ENCODE measurements at regions of chr4 and their contacts with region 1.

Region 1: GRCh38 chr4:67746797-67747495 is 7.2 kb downstream of the GNRHR start:
- DNase-seq: peak in 2 of 9 experiments; percentile 41 to 51
- ATAC-seq: no peak
- H3K4me3 ChIP-seq: no peak overlapping the region
- H3K4me3 Mint-ChIP-seq: no peak overlapping the region
- H3K27ac ChIP-seq: no peak overlapping the region
- H3K27ac Mint-ChIP-seq: no peak overlapping the region
- H3K4me1 ChIP-seq: no peaks in the 10 kb centered on the region
- H3K4me1 Mint-ChIP-seq: no peaks in the 10 kb centered on the region
- H3K27me3 ChIP-seq: no peaks in the 10 kb centered on the region
- H3K27me3 Mint-ChIP-seq: no peaks in the 10 kb centered on the region
- CTCF ChIP-seq: peak; percentile 87

Region 2: GRCh38 chr4:67393699-67394281 is 353.2 kb before region 1 on chr4:
- CTCF ChIA-PET with region 1: no interaction called
- POLR2A ChIA-PET with region 1: no interaction called
- intact Hi-C with region 1: no loop called
- DNase-seq: peak in 3 of 9 experiments; percentile 11 to 53 (median 46)
- ATAC-seq: no peak
- H3K4me3 ChIP-seq: no peak overlapping the region
- H3K4me3 Mint-ChIP-seq: no peak overlapping the region
- H3K27ac ChIP-seq: no peak overlapping the region
- H3K27ac Mint-ChIP-seq: no peak overlapping the region
- H3K4me1 ChIP-seq: no peaks in the 10 kb centered on the region
- H3K4me1 Mint-ChIP-seq: no peaks in the 10 kb centered on the region
- H3K27me3 ChIP-seq: no peaks in the 10 kb centered on the region
- H3K27me3 Mint-ChIP-seq: no peaks in the 10 kb centered on the region
- CTCF ChIP-seq: peak; percentile 95

Region 3: DNA sequence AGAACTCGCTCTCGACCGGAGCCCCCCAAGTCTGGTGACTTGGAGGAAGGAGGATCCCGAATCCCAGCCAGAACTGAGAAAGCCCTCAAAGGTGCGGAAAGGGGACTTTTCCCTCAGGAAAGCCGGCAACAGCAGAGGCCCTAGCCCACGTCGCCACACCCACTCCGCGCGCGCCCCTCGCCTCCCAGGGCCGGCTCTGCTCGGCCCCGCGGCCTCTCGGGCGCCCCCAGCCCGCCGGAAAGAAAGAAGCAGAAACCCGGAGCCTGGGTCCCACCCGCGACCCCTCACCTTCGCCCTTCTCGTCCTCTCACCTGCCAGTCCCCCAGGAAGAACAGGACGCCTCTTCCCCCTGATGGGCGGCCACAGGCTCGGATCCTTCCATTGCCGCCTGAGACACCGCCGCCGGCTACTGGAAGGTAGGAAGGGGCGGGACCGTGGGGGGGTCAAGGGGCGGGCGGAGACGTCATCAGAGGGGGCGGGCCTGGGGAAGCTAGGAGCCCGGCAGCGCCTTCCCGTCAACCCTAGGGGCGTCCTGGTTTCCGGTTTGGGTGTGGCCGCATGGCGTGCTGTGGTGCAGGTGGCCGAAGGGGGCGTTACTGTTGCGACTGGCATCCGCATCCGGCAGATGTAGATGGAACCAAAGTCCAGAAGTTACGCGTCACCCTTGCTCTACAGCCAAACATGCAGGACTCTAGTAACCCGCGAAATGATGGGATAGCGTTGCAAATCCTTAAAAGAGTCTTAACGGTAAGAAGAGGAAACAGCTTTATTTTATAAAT is 46.0 kb before region 1 on chr4 and contains the start of gene UBA6:
- CTCF ChIA-PET with region 1: interaction called, 5 read pairs
- POLR2A ChIA-PET with region 1: interaction called, 7 read pairs
- intact Hi-C with region 1: loop called in 1 of 2 experiments (anchors 2 kb)
- DNase-seq: peak; percentile 85 to 97 (median 95)
- ATAC-seq: peak; percentile 96
- H3K4me3 ChIP-seq: peak within 1 kb of the TSS; percentile 77 to 84
- H3K4me3 Mint-ChIP-seq: peak within 1 kb of the TSS; percentile 98
- H3K27ac ChIP-seq: peak within 1 kb of the TSS; percentile 78 to 79
- H3K27ac Mint-ChIP-seq: peak within 1 kb of the TSS; percentile 97
- H3K4me1 ChIP-seq: peaks cover 17% of the 10 kb centered on the region
- H3K4me1 Mint-ChIP-seq: peaks cover 70% of the 10 kb centered on the region
- H3K27me3 ChIP-seq: no peaks in the 10 kb centered on the region
- H3K27me3 Mint-ChIP-seq: no peaks in the 10 kb centered on the region
- CTCF ChIP-seq: peak; percentile 39
- total RNA-seq, gene UBA6: 35.9 to 44.7 TPM

Region 4: DNA sequence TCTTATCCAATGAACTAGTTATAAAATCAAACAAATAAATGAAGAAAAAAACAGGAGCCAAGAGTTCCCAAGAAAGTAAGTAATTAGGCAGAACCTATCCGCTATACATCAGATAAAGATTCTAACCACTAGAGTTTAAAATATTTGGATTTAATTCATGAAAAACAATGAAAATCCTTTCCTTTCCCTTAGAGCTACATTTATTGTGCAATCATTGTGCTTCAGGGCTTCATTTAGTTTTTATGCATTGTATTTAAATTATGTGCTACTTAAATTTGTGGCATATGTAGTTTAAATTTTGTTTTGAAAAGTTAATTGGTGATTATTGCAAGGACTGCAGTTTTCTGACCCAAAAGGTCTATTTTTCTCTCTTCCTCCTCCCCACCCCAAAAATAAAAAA is 10.7 kb before region 1 on chr4:
- CTCF ChIA-PET with region 1: interaction called, 11 read pairs
- POLR2A ChIA-PET with region 1: no interaction called
- intact Hi-C with region 1: no loop called
- DNase-seq: no peak
- ATAC-seq: no peak
- H3K4me3 ChIP-seq: no peak overlapping the region
- H3K4me3 Mint-ChIP-seq: no peak overlapping the region
- H3K27ac ChIP-seq: no peak overlapping the region
- H3K27ac Mint-ChIP-seq: no peak overlapping the region
- H3K4me1 ChIP-seq: no peaks in the 10 kb centered on the region
- H3K4me1 Mint-ChIP-seq: no peaks in the 10 kb centered on the region
- H3K27me3 ChIP-seq: no peaks in the 10 kb centered on the region
- H3K27me3 Mint-ChIP-seq: no peaks in the 10 kb centered on the region
- CTCF ChIP-seq: no peak

Measured in CD8-positive, alpha-beta T cell (primary cell).